CD4-positive, alpha-beta memory T cell (primary cell): ENCODE measurements at regions of chr9 and their contacts with region 1.

Region 1: GRCh38 chr9:97900738-97901565 is 21.3 kb downstream of the TRMO start:
- DNase-seq: peak; percentile 39 to 54 (median 43)
- H3K4me3 ChIP-seq: no peak overlapping the region
- H3K4me3 Mint-ChIP-seq: peak overlapping the region in 3 of 8 donors; percentile 20 to 59 (median 43)
- H3K27ac ChIP-seq: peak overlapping the region; percentile 21
- H3K27ac Mint-ChIP-seq: peak overlapping the region; percentile 75 to 93 (median 92)
- H3K4me1 ChIP-seq: peaks cover 59% of the 10 kb centered on the region
- H3K4me1 Mint-ChIP-seq: peaks cover 33 to 63% (median 45%) of the 10 kb centered on the region in 4 donors
- H3K27me3 ChIP-seq: no peaks in the 10 kb centered on the region
- H3K27me3 Mint-ChIP-seq: no peaks in the 10 kb centered on the region

Region 2: DNA sequence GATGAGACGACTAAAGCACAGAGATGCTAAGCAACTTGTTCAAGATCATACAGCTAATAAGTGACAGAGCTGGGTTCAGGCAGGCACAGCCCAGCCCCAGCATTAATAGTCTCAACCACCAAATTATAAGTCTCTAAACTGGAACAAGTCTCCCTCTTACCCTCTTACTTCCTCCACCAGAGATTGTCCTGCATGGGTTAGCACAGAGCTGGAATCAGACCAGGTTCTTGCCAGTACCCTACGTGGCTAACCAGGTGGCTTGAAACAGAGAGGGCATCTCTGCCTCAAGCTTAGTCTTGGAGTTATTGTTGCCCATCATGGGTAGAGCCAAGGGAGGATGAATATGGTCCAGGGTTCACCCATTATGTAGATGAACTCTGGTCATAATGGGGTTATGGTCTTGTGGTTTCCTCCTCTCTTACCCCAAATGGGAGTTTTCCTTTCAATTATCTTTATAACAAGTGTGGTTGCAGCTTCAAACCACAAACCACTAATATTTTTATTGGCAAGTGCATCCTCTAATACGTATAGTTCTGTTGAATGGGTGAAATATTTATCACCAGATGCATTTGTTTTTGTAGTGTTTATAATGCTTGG is 195.5 kb before region 1 on chr9:
- CTCF ChIA-PET with region 1: interaction called, 10 read pairs
- POLR2A ChIA-PET with region 1: interaction called, 3 read pairs
- intact Hi-C with region 1: loop called (anchors 1 kb)
- DNase-seq: peak in 3 of 5 donors; percentile 26 to 45 (median 37)
- H3K4me3 ChIP-seq: no peak overlapping the region
- H3K4me3 Mint-ChIP-seq: peak overlapping the region in 2 of 8 donors; percentile 19 to 29
- H3K27ac ChIP-seq: no peak overlapping the region
- H3K27ac Mint-ChIP-seq: peak overlapping the region in 2 of 7 donors; percentile 14 to 47
- H3K4me1 ChIP-seq: peaks cover 24% of the 10 kb centered on the region
- H3K4me1 Mint-ChIP-seq: peaks cover 15 to 39% (median 24%) of the 10 kb centered on the region in 4 donors
- H3K27me3 ChIP-seq: peaks cover 10% of the 10 kb centered on the region
- H3K27me3 Mint-ChIP-seq: peaks cover 4% of the 10 kb centered on the region in 2 donors

Region 3: GRCh38 chr9:97880336-97880735 is 20.6 kb before region 1 on chr9:
- CTCF ChIA-PET with region 1: interaction called, 312 read pairs
- POLR2A ChIA-PET with region 1: interaction called, 3 read pairs
- intact Hi-C with region 1: no loop called
- DNase-seq: no peak
- H3K4me3 ChIP-seq: no peak overlapping the region
- H3K4me3 Mint-ChIP-seq: no peak overlapping the region
- H3K27ac ChIP-seq: no peak overlapping the region
- H3K27ac Mint-ChIP-seq: no peak overlapping the region
- H3K4me1 ChIP-seq: no peaks in the 10 kb centered on the region
- H3K4me1 Mint-ChIP-seq: no peaks in the 10 kb centered on the region
- H3K27me3 ChIP-seq: no peaks in the 10 kb centered on the region
- H3K27me3 Mint-ChIP-seq: no peaks in the 10 kb centered on the region

Region 4: DNA sequence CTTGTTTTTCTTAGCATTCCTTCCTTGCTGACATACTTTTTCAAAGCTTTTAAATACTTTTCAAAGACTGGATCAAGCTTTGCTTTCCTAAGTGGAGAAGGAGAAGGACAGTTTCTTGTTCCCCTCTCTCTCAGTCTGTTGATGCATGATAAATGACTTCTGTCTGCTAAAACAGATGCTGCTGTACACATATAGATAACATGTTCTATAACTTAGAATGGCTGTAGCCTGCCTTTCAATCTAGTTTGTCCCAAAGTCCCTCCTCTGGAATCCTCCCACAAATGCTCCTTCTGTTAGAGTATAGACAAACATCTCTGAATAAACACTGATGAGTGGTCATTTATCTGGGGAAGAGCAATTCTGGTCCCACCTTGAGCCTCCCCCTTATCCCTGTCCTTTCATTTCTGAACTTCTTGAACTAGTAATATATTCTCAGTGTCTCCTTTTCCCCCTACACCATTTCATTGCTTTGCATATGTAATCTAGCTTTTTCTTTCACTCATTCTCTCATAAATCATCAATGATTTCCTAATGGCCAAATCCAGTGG is 42.4 kb after region 1 on chr9:
- CTCF ChIA-PET with region 1: interaction called, 10 read pairs
- POLR2A ChIA-PET with region 1: interaction called, 3 read pairs
- intact Hi-C with region 1: no loop called
- DNase-seq: no peak
- H3K4me3 ChIP-seq: no peak overlapping the region
- H3K4me3 Mint-ChIP-seq: no peak overlapping the region
- H3K27ac ChIP-seq: no peak overlapping the region
- H3K27ac Mint-ChIP-seq: no peak overlapping the region
- H3K4me1 ChIP-seq: peaks cover 12% of the 10 kb centered on the region
- H3K4me1 Mint-ChIP-seq: peaks cover 7 to 9% (median 8%) of the 10 kb centered on the region in 4 donors
- H3K27me3 ChIP-seq: no peaks in the 10 kb centered on the region
- H3K27me3 Mint-ChIP-seq: no peaks in the 10 kb centered on the region

Region 5: GRCh38 chr9:98064623-98065392 is 163.9 kb after region 1 on chr9:
- CTCF ChIA-PET with region 1: no interaction called
- POLR2A ChIA-PET with region 1: no interaction called
- intact Hi-C with region 1: no loop called
- DNase-seq: no peak
- H3K4me3 ChIP-seq: no peak overlapping the region
- H3K4me3 Mint-ChIP-seq: no peak overlapping the region
- H3K27ac ChIP-seq: no peak overlapping the region
- H3K27ac Mint-ChIP-seq: peak overlapping the region in 2 of 7 donors; percentile 16 to 29
- H3K4me1 ChIP-seq: no peaks in the 10 kb centered on the region
- H3K4me1 Mint-ChIP-seq: peaks cover 8 to 15% (median 10%) of the 10 kb centered on the region in 4 donors
- H3K27me3 ChIP-seq: no peaks in the 10 kb centered on the region
- H3K27me3 Mint-ChIP-seq: no peaks in the 10 kb centered on the region